ENCODE measurements at regions of chr5 and their contacts with region 1.

Region 1: DNA sequence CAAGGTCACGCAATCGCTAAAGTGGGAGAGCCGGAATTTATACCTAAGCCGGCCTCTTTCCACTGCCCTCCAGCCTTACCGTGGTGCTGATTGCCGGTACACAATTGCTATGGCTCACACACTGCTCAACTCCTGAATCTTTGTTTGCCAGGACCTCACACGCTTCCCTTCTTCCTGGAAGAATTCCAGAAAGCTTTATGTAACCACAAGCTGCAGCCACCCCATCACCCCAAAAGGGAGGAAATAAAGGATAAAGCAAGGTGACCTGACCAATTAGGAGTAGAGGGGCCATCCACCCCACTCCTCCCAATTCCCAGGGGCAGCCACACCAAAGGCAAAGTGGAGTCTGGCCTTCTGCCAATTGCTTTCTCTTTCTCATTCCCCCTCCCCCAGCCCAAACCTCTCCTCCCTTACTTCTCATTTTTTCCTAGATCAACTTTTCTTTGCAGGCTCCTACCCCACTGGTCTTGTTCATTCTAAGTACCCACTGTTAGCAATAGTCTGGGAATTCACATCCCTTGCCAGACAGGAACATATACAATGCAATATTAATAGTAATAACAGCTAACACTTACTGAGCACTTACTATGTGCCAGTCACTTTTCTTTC is 18.0 kb upstream of the CDC23 start:
- DNase-seq: peak; percentile 33
- H3K4me3 ChIP-seq: no peak overlapping the region
- H3K27ac ChIP-seq: no peak overlapping the region
- H3K4me1 ChIP-seq: no peaks in the 10 kb centered on the region
- H3K27me3 ChIP-seq: no peaks in the 10 kb centered on the region
- CTCF ChIP-seq: no peak

Region 2: GRCh38 chr5:137712139-137712667 is 518.9 kb before region 1 on chr5:
- CTCF ChIA-PET with region 1: interaction called, 14 read pairs
- POLR2A ChIA-PET with region 1: no interaction called
- intact Hi-C with region 1: no loop called
- DNase-seq: no peak
- H3K4me3 ChIP-seq: no peak overlapping the region
- H3K27ac ChIP-seq: no peak overlapping the region
- H3K4me1 ChIP-seq: no peaks in the 10 kb centered on the region
- H3K27me3 ChIP-seq: no peaks in the 10 kb centered on the region
- CTCF ChIP-seq: no peak

Region 3: GRCh38 chr5:138282920-138283742 is 52.0 kb after region 1 on chr5:
- CTCF ChIA-PET with region 1: no interaction called
- POLR2A ChIA-PET with region 1: no interaction called
- intact Hi-C with region 1: loop called (anchors 2 kb)
- DNase-seq: peak; percentile 57
- H3K4me3 ChIP-seq: no peak overlapping the region
- H3K27ac ChIP-seq: no peak overlapping the region
- H3K4me1 ChIP-seq: no peaks in the 10 kb centered on the region
- H3K27me3 ChIP-seq: no peaks in the 10 kb centered on the region
- CTCF ChIP-seq: peak; percentile 60

Measured in A673 (cell line).